HEK293T (cell line): ENCODE measurements at regions of chr11 and their contacts with region 1.

Region 1: DNA sequence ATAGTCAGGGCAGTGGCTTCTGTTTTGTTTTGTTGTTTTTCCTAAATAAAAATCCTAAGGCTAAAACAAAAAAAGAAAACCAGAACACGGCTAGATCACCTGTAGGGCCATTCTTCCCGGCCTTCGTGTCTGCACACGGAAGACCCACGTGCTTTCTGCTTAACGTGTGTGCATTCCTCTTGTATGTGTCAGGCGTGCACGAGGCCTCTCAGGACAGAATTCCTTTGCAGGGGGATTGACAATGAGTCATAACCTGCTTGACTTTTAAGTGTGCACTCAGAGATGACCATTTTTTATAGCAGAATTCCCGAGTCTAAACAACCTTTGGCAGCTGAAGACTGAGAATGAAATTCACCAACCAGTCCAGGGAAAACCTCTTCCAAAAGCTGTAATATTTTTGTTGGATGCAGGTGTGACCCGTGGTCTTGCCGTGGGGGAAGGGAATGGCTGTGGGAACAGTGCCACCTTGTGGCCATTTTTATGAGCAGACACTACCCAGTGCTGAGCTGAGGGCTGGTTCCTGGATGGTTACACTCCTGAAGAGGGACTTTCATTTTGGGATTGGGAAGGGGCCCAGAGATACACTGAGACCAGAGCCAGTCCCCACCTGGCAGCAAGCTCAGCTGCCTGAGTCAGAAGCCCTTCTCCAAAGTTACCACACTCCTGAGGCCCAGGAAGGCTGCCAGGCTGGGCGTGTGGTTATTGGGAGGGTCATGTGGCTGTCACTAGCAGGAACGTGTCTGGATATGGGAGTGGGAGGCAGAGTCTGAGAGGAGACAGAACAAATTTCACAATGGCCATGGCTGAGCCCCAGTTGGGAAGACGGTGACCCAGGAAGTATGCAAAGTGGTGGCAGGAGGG is 35.8 kb upstream of the DKK3 start:
- DNase-seq: peak; percentile 78

Region 2: DNA sequence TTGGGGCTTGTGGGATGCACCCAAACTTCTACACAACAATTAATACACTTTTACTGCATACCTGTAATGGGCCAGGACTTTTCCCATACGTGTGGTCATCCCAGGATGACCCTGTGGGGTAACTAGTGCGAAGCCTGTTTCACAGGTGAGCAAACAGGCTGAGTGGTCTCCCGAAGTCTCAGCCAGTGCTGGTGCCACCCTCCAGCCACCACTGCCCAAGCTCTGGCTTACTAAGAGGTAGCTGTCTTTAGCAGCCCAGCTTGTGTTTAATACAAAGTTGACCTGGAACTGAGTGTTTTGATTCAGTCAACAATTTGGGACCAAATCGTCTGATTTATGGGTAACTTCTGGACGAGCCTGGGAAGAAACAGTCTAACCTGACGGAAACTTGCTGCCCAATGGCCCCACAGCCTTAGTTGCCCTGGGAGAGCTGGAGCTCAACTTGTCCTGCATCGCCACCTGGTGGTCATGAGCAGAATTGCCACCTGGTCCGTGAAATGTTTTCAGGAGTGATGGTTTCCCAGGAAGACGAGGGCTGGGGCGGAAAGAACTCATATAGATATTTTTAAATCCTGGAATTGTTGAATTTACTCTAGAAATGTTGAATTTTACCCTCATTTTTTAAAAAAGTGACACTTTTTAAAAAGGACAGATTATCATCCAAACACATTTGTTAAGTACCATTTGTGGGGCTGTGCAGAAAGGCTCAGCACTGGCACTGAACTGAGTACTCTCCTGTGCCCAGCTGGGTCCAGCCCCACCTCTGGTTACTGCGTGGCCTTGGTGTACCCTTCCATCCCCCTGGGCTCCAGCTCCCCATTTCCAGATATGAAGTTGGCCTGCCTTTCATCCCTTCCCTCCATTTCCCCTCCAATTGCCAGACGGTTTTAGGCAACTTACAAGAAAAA is 237.6 kb after region 1 on chr11:
- CTCF ChIA-PET with region 1: interaction called, 37 read pairs
- POLR2A ChIA-PET with region 1: no interaction called
- DNase-seq: peak; percentile 89